ENCODE measurements at regions of chr1 and their contacts with region 1.

Region 1: DNA sequence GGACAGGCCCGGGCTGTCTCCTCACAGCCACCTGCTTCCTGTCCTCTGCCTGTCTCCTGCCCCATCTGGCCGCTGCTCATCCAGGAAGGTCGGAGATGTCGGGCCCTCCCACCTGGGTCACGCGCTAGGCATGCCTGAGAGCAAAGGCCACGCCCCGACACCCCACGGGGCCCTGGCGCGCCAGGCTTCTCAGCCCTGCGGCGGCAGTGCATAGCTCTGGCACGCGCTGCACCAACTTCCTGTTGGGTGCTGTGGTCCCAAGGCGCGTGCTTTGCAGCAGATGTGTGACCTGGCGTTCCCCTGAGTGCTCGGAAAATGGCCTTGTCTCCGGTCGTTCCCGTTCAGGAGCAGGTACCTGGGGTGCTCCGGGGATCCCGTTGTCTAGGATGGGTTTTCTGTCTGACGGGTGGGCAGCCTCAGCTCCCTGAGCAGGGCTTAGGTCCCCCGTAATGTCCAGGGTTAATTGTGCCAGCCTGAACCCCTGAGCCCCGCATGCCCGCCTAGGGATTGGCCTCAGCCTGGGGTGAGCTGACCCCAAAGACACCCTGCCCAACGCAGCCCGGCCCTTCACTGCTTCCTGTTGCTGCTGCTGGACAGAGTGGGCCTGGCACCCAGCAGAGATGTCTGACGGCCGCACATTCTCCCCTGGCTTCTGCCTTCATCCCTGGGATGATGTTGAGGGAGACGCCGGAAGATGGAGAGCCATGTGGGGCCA is 19.4 kb upstream of the KCNAB2 start:
- DNase-seq: peak; percentile 87
- ATAC-seq: peak; percentile 84
- H3K4me3 Mint-ChIP-seq: peak overlapping the region; percentile 86
- H3K27ac Mint-ChIP-seq: peak overlapping the region; percentile 90
- H3K4me1 Mint-ChIP-seq: peaks cover 71% of the 10 kb centered on the region
- H3K27me3 Mint-ChIP-seq: no peaks in the 10 kb centered on the region
- CTCF ChIP-seq: no peak

Region 2: GRCh38 chr1:5927506-5928370 is 98.5 kb before region 1 on chr1:
- CTCF ChIA-PET with region 1: no interaction called
- POLR2A ChIA-PET with region 1: no interaction called
- intact Hi-C with region 1: no loop called
- DNase-seq: no peak
- ATAC-seq: no peak
- H3K4me3 Mint-ChIP-seq: no peak overlapping the region
- H3K27ac Mint-ChIP-seq: no peak overlapping the region
- H3K4me1 Mint-ChIP-seq: no peaks in the 10 kb centered on the region
- H3K27me3 Mint-ChIP-seq: no peaks in the 10 kb centered on the region
- CTCF ChIP-seq: no peak

Region 3: GRCh38 chr1:5992026-5992813 is 34.0 kb before region 1 on chr1 and contains the start of gene NPHP4:
- CTCF ChIA-PET with region 1: interaction called, 4 read pairs
- POLR2A ChIA-PET with region 1: interaction called, 73 read pairs
- intact Hi-C with region 1: loop called (anchors 1 kb)
- DNase-seq: peak; percentile 93
- ATAC-seq: peak; percentile 90
- H3K4me3 Mint-ChIP-seq: peak within 1 kb of the TSS; percentile 94
- H3K27ac Mint-ChIP-seq: peak within 1 kb of the TSS; percentile 84
- H3K4me1 Mint-ChIP-seq: peaks cover 34% of the 10 kb centered on the region
- H3K27me3 Mint-ChIP-seq: no peaks in the 10 kb centered on the region
- CTCF ChIP-seq: no peak
- total RNA-seq, gene NPHP4: 6.2 and 8.0 TPM in 2 replicates

Region 4: DNA sequence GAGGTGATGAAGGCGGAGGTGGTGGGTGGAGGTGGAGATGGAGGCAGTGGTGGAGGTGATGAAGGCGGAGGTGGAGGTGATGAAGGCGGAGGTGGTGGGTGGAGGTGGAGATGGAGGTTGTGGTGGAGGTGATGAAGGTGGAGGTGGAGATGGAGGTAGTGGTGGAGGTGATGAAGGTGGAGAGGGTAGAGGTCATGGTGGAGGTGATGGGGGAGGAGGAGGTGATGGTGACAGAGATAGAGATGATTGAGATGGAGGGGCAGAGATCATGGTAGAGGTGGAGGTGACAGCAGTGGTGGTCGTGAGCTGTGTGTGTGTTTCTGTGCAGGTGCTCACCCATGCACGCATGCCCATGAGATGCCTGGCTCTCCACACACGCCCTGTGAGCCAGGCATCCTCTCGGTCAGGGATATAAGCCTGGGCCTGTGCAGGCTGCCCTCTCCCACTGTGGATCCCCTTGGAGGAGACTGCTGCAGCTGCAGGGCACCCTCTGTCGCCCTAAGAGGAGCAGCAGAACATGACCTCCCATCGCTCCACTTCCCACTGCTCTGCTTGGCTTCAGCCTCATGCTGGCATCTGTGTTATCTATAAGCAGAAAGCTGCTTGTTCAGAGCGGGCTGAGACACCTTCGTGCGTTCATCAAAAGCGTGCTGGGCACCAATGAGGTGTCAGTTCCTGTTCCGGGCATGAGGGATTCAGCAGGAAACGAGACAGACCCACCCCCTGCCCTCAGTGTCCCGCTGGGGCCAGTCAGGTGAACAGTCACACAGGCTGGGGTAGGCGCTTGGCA is 13.5 kb before region 1 on chr1:
- CTCF ChIA-PET with region 1: interaction called, 3 read pairs
- POLR2A ChIA-PET with region 1: no interaction called
- intact Hi-C with region 1: loop called (anchors 2 kb)
- DNase-seq: no peak
- ATAC-seq: peak; percentile 93
- H3K4me3 Mint-ChIP-seq: no peak overlapping the region
- H3K27ac Mint-ChIP-seq: peak overlapping the region; percentile 46
- H3K4me1 Mint-ChIP-seq: peaks cover 13% of the 10 kb centered on the region
- H3K27me3 Mint-ChIP-seq: no peaks in the 10 kb centered on the region
- CTCF ChIP-seq: no peak

Region 5: DNA sequence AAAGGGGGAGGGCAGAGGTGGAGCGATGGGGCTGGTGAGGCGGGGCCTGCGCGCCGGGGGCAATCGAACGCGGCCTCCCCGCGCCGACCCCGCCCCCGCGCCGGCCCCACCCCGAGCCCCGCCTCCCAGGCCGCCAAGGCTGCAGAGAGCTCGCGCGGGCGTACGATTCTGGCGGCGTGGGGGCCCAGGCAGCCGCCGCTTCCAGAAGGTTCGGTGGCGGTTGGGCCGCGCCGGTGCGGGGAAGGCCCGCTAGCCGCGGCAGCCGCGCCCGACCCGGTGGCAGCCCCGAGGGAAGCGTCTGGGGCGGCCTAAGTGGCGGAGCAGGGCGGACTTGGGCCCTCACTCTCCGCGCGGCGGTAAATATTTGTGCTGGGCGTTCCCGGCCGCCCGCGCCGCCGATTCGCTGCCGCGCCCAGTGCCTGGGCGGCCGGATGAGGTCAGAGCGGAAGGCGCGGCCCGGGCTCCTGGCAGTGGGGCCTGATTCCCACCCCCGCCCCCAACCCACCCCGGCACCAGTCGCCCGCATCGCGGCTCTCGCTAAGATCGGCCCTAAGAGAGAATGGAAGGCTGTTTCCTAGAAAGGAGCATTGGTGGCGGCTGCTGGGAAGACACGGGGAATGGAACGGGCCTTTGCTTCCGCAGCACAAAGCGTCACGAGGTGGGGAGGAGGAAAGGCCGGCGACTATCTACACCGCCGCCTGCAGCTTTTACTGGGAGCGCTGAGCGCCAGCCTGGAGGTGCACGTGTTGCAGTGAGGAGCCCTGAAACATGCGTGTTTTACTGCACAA is 367.3 kb after region 1 on chr1 and contains the start of gene ACOT7:
- CTCF ChIA-PET with region 1: no interaction called
- POLR2A ChIA-PET with region 1: no interaction called
- intact Hi-C with region 1: loop called (anchors 5 kb)
- DNase-seq: peak; percentile 86
- ATAC-seq: peak; percentile 91
- H3K4me3 Mint-ChIP-seq: peak within 1 kb of the TSS; percentile 87
- H3K27ac Mint-ChIP-seq: peak within 1 kb of the TSS; percentile 93
- H3K4me1 Mint-ChIP-seq: peaks cover 22% of the 10 kb centered on the region
- H3K27me3 Mint-ChIP-seq: no peaks in the 10 kb centered on the region
- CTCF ChIP-seq: no peak
- total RNA-seq, gene ACOT7: 12.3 and 12.7 TPM in 2 replicates

Measured in activated B cell treated with CpG ODN at 0.5 μM for 24 hours (primary cell).